T-cell (primary cell): ENCODE measurements at regions of chr1 and their contacts with region 1.

Region 1: DNA sequence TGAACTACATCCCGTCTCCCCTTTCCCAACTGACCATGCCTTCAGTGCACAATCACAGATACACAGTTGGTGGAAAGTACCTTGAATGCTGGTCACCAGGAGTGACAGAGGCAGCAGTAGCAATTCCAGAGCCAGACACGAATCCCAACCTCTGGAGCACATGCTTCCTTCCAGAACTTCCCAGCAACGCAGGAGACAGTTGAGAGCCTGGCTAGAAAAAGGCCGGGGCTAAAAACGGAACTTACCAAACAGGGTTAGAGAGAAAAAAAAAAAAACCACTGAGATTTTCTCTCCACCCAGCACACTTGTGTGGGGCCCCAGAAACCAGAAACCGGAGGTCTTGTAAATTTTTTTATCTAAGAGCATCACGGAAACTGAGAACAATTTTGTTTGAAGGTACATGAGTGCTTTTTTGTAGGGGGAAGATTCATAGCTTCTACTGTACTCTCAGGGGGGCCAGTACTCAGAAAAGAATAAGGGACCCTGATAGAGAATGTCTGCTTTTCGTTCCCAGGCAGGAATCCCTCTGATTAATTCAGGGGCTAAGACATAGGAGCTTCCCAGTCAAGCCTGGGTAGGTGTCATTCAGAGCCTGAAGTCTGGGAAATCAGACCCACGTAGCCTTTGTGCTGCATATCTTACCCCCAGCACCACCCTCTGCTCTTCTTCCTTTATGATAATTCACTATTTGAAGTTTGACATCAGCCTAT is at the start of gene CD48:
- DNase-seq: peak in 34 of 35 experiments; percentile 24 to 79 (median 48)
- ATAC-seq: peak; percentile 54 to 77 (median 60)
- H3K4me3 ChIP-seq: peak within 1 kb of the TSS; percentile 78 to 94
- H3K4me3 Mint-ChIP-seq: no peak within 1 kb of the TSS
- H3K27ac ChIP-seq: peak within 1 kb of the TSS; percentile 95
- H3K27ac Mint-ChIP-seq: no peak within 1 kb of the TSS
- H3K4me1 ChIP-seq: peaks cover 50 to 51% of the 10 kb centered on the region in 2 experiments
- H3K4me1 Mint-ChIP-seq: peaks cover 39 to 50% (median 47%) of the 10 kb centered on the region in 3 donors
- H3K27me3 ChIP-seq: no peaks in the 10 kb centered on the region
- H3K27me3 Mint-ChIP-seq: no peaks in the 10 kb centered on the region
- total RNA-seq, gene CD48: 249 to 393 (median 273) TPM

Region 2: DNA sequence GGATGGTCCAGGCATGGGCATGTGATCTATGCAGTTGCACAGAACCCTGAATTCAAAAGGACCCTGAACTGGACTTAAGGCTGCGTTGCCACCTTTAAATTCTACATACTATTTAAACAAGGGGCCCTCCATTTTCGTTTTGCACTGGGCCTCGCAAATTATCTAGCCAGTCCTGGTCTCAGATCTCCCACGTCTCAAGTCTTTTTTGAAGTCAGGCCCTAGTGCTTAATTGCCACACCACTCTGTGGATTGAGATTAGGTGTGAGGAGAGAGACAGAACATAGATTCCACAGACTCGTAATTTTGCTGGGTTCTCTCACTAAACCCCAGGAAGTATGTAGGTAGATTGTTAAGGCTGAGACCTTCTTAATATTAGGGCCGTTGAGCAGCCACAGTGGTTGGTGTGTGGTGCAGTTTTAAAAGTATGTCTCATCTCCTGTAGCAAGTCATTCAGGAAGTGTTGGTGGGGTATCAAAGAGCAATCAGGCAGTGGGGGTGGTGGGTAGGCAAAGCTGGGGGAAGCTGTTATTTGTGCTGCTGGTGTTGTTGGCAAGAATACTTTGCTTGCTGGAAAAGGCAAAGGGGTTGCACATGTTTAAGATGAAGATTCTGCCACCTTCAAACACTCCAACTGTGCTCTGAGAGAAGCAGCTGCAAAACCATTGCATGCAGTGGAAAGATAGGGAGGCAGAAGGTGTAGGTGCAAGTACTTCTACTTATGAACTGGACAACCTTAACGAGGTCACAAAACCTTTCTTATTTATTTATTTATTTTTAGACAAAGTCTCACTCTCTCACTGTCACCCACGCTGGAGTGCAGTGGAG is 143.7 kb before region 1 on chr1:
- CTCF ChIA-PET with region 1: no interaction called
- POLR2A ChIA-PET with region 1: no interaction called
- DNase-seq: peak; percentile 43 to 84 (median 66)
- ATAC-seq: peak; percentile 94 to 98 (median 96)
- H3K4me3 ChIP-seq: peak overlapping the region; percentile 1 to 23
- H3K4me3 Mint-ChIP-seq: peak overlapping the region; percentile 54 to 77 (median 69)
- H3K27ac ChIP-seq: peak overlapping the region; percentile 87
- H3K27ac Mint-ChIP-seq: peak overlapping the region; percentile 98
- H3K4me1 ChIP-seq: peaks cover 56 to 67% of the 10 kb centered on the region in 2 experiments
- H3K4me1 Mint-ChIP-seq: peaks cover 88 to 97% (median 93%) of the 10 kb centered on the region in 3 donors
- H3K27me3 ChIP-seq: no peaks in the 10 kb centered on the region
- H3K27me3 Mint-ChIP-seq: no peaks in the 10 kb centered on the region

Region 3: DNA sequence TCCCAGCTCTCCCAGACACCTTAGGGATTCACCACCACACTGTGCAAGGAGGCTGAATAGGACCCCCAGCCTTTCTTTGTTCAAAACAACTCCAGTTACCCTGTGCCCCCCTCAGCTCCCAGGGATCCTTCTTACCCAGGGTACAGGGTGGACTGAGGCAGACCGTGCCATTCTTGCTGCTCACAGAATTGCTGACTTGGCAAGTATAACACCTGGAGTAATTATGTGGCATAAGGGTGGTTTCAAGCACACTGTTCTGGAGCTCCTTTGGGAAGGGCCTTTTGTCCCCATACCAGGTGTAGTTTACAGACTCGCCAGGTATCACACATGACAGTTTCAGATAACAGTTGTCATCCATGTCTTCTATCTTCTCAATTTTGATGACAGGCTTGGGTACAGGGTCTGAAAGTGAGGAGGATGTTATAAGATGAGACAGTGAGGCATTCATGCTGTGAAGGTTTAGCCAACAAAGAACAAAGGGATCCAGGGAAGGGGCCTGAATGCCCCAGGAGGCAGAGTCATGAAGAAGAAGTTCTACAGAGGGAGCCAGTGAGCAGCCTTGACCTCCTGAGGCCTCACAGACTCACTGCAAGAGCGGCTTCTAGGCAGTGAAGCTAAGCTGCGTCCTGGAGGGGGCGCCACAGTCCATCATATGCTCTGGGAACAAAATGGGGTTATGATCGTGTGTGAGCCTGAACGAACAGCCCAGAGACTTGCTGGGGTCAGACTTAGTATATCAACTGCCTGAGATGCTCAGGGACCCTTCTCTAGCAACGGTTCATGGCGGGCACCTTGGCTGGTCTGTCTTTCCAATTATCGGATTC is 30.5 kb before region 1 on chr1:
- CTCF ChIA-PET with region 1: interaction called in 1 of 2 experiments, 52 read pairs
- POLR2A ChIA-PET with region 1: interaction called, 3 to 4 read pairs
- DNase-seq: peak; percentile 78 to 95 (median 87)
- ATAC-seq: peak; percentile 82 to 89 (median 87)
- H3K4me3 ChIP-seq: no peak overlapping the region
- H3K4me3 Mint-ChIP-seq: peak overlapping the region in 1 of 3 donors; percentile 63
- H3K27ac ChIP-seq: peak overlapping the region; percentile 48
- H3K27ac Mint-ChIP-seq: peak overlapping the region; percentile 90 to 95
- H3K4me1 ChIP-seq: peaks cover 28 to 55% of the 10 kb centered on the region in 2 experiments
- H3K4me1 Mint-ChIP-seq: peaks cover 52 to 61% (median 57%) of the 10 kb centered on the region in 3 donors
- H3K27me3 ChIP-seq: no peaks in the 10 kb centered on the region
- H3K27me3 Mint-ChIP-seq: no peaks in the 10 kb centered on the region

Region 4: GRCh38 chr1:160726498-160727315 is 14.9 kb after region 1 on chr1:
- CTCF ChIA-PET with region 1: interaction called, 3 to 15 read pairs
- POLR2A ChIA-PET with region 1: interaction called, 3 read pairs
- DNase-seq: peak in 34 of 35 experiments; percentile 19 to 89 (median 52)
- ATAC-seq: peak; percentile 74 to 87 (median 77)
- H3K4me3 ChIP-seq: no peak overlapping the region
- H3K4me3 Mint-ChIP-seq: no peak overlapping the region
- H3K27ac ChIP-seq: no peak overlapping the region
- H3K27ac Mint-ChIP-seq: no peak overlapping the region
- H3K4me1 ChIP-seq: peaks cover 6 to 17% of the 10 kb centered on the region in 2 experiments
- H3K4me1 Mint-ChIP-seq: peaks cover 17 to 18% (median 17%) of the 10 kb centered on the region in 3 donors
- H3K27me3 ChIP-seq: no peaks in the 10 kb centered on the region
- H3K27me3 Mint-ChIP-seq: no peaks in the 10 kb centered on the region